Right ventricle myocardium superior (tissue), 1 donor: ENCODE measurements at regions of chr15 and their contacts with region 1.

Region 1: GRCh38 chr15:93035953-93036800 is 52.8 kb downstream of the RGMA start:
- DNase-seq: peak; percentile 57
- ATAC-seq: peak; percentile 46

Region 2: GRCh38 chr15:93359425-93360131 is 323.4 kb after region 1 on chr15:
- intact Hi-C with region 1: no loop called
- DNase-seq: no peak
- ATAC-seq: no peak

Region 3: GRCh38 chr15:93982226-93982727 is 946.1 kb after region 1 on chr15:
- intact Hi-C with region 1: loop called (anchors 5 kb)
- DNase-seq: peak; percentile 59
- ATAC-seq: peak; percentile 81

Region 4: DNA sequence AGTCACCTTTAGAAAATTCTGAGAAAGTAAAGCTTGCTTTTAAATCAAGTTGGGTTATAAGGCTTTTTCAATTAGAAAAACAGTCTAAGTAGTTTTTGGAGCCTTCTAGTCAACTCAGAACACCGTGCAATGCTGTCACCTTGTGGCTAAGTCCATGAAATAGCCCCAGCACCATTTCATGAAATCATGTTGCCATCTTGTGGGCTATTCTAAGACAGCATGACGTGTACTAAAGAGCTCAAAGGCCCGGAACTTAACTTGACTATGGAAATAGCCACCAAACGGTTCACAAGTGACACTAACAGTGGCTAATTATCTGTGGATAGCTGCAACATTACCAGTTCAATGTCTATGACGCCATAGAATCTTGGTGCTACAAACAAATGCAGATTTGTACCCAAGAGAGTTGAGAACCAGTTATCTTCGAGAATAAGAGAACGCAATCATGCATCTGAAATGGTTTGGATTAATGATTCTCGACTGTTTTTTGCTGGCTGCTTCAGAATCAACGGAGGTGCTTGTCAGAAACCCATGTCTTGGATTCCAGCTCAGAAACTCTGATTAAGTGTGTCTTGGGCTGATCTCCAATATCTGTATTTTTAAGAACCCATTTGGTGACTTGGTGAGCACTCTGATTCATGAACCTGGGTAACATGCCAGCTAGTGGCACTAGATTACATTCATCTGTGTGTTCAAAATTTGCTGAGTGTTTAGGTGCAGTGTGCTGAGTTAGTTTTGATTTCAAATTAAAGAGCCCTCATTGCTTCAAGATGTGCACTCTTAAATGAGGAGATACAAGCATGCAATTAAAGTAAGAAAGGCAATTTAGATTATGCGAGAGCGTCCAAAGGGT is 1084.0 kb after region 1 on chr15:
- intact Hi-C with region 1: loop called (anchors 5 kb)
- DNase-seq: peak; percentile 42
- ATAC-seq: peak; percentile 96